IMR-90 (cell line): ENCODE measurements at regions of chr11 and their contacts with region 1.

Region 1: DNA sequence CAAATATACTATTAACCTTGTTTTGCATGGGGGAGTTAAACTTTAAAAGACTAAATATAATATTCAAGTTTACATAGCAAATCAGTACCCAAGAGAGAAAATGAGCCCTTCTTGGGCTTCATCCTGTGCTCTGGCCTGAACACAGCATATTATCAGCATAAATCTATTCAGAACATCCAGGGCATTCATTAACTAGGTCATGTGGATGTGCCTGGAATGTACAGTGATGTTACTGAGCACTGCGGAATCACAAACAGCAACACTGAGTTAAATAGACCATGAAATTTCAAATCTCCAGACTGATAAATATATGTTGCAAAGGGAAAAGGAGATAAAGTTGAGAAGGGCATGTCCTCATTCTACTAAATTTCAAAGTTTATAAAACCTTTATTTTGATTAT is 426.4 kb downstream of the AASDHPPT start:
- DNase-seq: no peak
- ATAC-seq: peak; percentile 35; the same call in 1 of the 2 replicates
- H3K4me3 ChIP-seq: no peak overlapping the region
- H3K27ac ChIP-seq: no peak overlapping the region
- H3K4me1 ChIP-seq: no peaks in the 10 kb centered on the region
- H3K27me3 ChIP-seq: no peaks in the 10 kb centered on the region
- CTCF ChIP-seq: no peak
- POLR2A ChIP-seq: no peak
- RAD21 ChIP-seq: no peak

Region 2: DNA sequence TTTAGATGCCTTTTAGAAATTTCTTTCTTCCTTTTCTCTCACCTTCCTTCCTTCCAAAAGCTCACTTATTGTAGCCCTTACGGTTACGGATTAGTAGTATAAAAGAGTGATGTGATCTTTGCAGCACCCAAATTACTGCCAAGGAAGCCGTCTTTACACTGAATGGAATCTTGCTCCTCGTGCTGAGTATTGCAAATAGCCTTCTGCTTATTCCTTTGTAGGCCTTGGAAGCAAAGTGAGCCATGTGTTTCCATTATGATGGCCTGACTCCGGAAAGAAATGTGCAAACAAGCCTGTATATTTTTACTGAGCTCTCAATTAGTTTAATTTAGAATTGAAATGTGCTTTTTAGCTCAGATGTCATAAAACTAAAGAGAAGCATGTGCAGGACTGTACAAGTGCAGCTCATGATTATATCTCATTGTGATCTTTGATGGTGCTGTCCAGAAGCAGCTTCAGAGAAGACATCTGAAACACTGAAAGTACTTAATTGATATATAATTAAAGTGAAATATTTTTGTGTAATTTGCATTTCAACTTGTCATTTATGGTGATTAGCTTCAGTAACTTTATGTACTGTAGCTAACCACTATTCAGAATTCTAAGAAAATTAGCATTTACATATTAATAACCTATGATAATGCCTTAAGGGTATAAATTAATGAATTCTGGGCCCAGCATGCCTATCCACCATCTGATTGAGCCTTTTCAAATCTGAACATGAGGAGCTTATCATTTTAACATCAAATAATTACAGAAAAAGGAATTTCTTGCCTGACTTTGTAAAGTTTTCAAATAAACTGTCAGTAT is 764.7 kb before region 1 on chr11:
- CTCF ChIA-PET with region 1: no interaction called
- POLR2A ChIA-PET with region 1: no interaction called
- dilution Hi-C with region 1: no loop called
- in situ Hi-C with region 1: no loop called
- intact Hi-C with region 1: loop called (anchors 5 kb)
- DNase-seq: no peak
- ATAC-seq: no peak
- H3K4me3 ChIP-seq: no peak overlapping the region
- H3K27ac ChIP-seq: no peak overlapping the region
- H3K4me1 ChIP-seq: no peaks in the 10 kb centered on the region
- H3K27me3 ChIP-seq: no peaks in the 10 kb centered on the region
- CTCF ChIP-seq: no peak
- POLR2A ChIP-seq: no peak
- RAD21 ChIP-seq: no peak